ENCODE measurements at regions of chr16 and their contacts with region 1.

Region 1: DNA sequence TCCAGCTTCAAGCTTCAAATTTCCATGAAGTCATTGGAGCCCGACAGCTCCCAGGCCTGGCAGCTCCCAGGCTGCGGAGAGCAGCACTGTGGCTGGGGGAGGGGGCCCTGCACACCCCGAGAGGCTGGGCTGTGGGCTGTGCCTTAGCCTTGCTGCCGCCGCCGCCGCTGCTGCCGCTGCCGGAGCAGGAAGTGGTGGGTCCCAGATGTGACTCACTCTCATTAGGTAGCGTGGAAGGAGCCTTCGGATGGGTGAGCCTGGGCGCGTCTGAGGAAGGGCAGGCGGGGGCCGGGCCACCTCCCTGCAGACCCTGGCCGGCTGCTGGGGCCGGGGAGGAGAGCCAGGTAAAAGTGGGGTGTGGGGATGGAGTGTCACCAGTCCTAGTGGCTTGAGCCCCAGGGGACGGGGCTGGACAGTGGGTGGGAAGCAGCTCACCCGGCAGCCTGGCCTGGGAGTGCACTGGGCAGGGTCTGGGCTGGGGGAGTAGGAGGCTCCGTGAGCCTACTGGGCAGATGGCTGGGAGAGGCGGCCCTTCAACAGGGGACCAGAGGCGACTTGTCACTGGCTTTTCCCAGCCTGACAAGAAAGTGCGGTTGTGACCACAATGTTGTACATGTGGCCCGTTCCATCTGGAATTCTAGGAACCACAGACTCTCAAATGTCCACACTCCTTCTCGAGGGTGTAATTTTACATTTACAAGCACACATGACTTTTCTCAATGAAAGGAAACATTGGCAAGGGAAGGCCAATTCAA is at the start of gene ADCY7:
- DNase-seq: peak; percentile 77
- H3K4me3 Mint-ChIP-seq: peak within 1 kb of the TSS; percentile 91
- H3K27ac Mint-ChIP-seq: peak within 1 kb of the TSS; percentile 92
- H3K4me1 Mint-ChIP-seq: peaks cover 47% of the 10 kb centered on the region
- H3K27me3 Mint-ChIP-seq: no peaks in the 10 kb centered on the region
- total RNA-seq, gene ADCY7: 78.7 and 89.5 TPM in 2 replicates

Region 2: DNA sequence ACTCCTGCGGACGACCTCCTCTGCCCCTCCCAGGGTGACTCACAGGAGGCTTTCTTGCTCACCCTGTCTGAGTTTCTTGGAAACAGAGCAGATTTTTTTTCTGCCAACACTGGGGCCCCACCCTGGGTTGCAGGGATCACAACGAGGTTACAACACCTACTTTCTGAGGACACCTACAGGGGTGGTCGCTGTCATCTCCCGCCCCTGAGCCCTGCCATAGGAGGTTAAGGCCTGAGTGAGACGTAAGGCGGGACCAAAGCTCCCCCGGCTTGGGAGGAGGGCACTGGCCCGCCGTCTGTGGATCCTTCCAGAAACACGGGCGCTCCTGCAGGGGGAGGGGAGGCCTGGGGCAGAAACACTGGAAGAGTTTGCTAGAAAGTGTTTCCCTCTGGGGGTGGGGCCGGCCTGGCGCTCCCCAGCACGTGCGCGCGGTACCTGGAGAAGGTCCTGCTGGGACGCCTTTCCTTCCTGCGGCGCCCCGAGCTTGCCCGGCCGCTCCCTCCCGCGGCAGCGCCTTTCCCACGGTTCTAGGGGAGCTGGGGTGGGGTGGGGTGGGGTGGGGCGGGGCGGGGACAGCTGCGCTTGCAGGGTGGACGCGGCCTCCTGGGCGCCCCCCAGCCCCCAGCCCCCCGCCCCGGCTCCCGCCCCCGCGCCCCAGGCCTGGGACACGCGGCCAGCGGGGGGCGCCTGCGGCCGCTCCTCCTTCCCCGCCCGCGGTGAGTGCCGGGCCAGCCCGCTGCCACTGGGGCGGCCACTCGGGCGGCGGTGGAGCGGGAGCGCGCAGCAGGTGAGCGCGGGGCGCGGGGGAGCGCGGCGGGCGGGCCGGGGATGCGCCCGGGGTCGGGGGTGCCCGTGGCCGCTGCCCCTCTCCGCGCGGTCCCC is 20.9 kb before region 1 on chr16:
- intact Hi-C with region 1: loop called (anchors 2 kb)
- DNase-seq: peak; percentile 42
- H3K4me3 Mint-ChIP-seq: peak overlapping the region; percentile 79
- H3K27ac Mint-ChIP-seq: peak overlapping the region; percentile 70
- H3K4me1 Mint-ChIP-seq: peaks cover 14% of the 10 kb centered on the region
- H3K27me3 Mint-ChIP-seq: peaks cover 14% of the 10 kb centered on the region

Region 3: GRCh38 chr16:50313596-50314478 is 47.3 kb after region 1 on chr16:
- intact Hi-C with region 1: loop called (anchors 5 kb)
- DNase-seq: peak; percentile 54
- H3K4me3 Mint-ChIP-seq: peak overlapping the region; percentile 49
- H3K27ac Mint-ChIP-seq: peak overlapping the region; percentile 86
- H3K4me1 Mint-ChIP-seq: peaks cover 20% of the 10 kb centered on the region
- H3K27me3 Mint-ChIP-seq: no peaks in the 10 kb centered on the region

Region 4: GRCh38 chr16:50397196-50397595 is 130.7 kb after region 1 on chr16:
- intact Hi-C with region 1: no loop called
- DNase-seq: no peak
- H3K4me3 Mint-ChIP-seq: no peak overlapping the region
- H3K27ac Mint-ChIP-seq: no peak overlapping the region
- H3K4me1 Mint-ChIP-seq: peaks cover 4% of the 10 kb centered on the region
- H3K27me3 Mint-ChIP-seq: peaks cover 4% of the 10 kb centered on the region

Measured in activated T-helper 2 cell treated with anti-CD3 and anti-CD28 coated beads, Interferon-gamma antibody, Interleukin-2, Interleukin-4, amounts not matched to agents 10 μg/mL and 5 μg/mL and 100 μg/mL, durations not matched to agents 14 hours and 24 hours and 36 hours (primary cell).